Thyroid gland (tissue), 4 donors: ENCODE measurements at regions of chr13 and their contacts with region 1.

Region 1: GRCh38 chr13:99990126-99990977 is 8.8 kb downstream of the ZIC2 start:
- DNase-seq: no peak
- H3K4me3 ChIP-seq: no peak overlapping the region
- H3K27ac ChIP-seq: no peak overlapping the region
- H3K4me1 ChIP-seq: peaks cover 0 to 13% of the 10 kb centered on the region in 2 donors
- H3K27me3 ChIP-seq: peaks cover 89% of the 10 kb centered on the region
- CTCF ChIP-seq: no peak
- POLR2A ChIP-seq: no peak

Region 2: DNA sequence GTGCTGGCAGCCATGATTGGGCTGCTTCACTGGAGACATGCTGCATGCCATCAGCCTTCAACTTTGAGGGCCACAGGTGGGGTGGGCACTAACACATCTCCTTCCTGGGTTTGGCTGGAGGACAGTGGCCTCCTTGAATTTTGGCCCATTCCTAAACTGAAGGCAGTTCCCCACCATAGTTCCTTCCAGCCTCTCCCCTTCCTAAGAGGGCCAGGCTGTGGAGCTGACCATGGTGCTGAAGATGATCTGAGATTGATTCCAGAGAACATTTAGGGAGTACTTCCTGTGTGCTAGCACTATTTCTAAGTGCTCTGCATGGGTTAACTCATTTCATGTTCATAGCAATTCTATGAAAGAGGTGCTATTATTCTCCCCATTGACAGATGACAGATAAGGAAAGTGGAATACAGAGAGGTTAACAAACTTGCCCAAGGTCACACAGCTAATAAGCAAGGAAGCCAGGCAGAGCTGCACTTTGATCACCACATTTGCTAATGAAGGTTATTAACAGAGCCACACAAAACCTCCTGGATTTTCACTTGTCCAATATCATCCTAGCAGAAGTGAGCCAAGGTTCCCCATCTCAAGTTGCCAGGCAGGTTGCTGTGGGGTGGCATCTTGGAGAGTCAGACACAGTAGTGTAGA is 194.1 kb before region 1 on chr13:
- intact Hi-C with region 1: no loop called
- DNase-seq: peak in 1 of 2 donors; percentile 31
- H3K4me3 ChIP-seq: no peak overlapping the region
- H3K27ac ChIP-seq: no peak overlapping the region
- H3K4me1 ChIP-seq: no peaks in the 10 kb centered on the region
- H3K27me3 ChIP-seq: no peaks in the 10 kb centered on the region
- CTCF ChIP-seq: no peak
- POLR2A ChIP-seq: no peak

Region 3: DNA sequence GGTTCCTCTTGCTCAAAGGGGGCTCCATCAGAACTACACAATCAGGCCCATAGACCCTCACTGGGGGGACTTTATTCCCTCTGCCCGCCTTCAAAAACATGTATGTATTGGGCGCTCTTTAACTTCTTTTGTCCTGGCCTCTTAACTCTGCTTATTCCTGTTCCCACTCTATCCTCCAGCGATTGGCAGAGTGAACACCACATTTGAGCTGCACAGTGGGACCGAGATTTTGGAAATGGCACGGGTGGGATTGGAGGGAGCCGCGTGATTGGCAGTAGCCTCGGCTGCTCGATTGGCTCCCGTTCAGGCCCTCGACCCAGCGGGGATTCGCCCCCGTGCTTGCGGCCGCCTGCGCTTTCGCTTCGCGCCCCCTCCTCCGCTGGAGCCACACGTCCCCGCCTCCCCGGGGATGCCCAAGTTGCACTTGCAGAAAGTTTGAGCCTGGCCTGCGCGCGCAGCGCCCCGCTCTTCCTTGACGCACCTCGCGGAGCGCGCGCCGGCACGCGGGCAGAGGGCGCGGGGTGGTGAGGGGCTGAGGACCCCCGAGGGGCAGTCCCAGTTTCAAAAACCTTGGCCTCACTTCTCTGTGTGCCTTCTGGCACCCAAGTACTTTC is 18.7 kb before region 1 on chr13 and contains the start of gene ZIC5:
- intact Hi-C with region 1: loop called (anchors 2 kb)
- DNase-seq: no peak
- H3K4me3 ChIP-seq: peak within 1 kb of the TSS in 1 of 3 donors; percentile 6
- H3K27ac ChIP-seq: no peak within 1 kb of the TSS
- H3K4me1 ChIP-seq: peaks cover 20 to 35% of the 10 kb centered on the region in 2 donors
- H3K27me3 ChIP-seq: peaks cover 83% of the 10 kb centered on the region
- CTCF ChIP-seq: no peak
- POLR2A ChIP-seq: no peak
- total RNA-seq, gene ZIC5: not detected